Heart right ventricle (tissue), 16 donors: ENCODE measurements at regions of chr9 and their contacts with region 1.

Region 1: GRCh38 chr9:14358523-14358922 is 44.6 kb upstream of the NFIB start:
- DNase-seq: no peak
- ATAC-seq: no peak
- H3K4me3 ChIP-seq: no peak overlapping the region
- H3K27ac ChIP-seq: no peak overlapping the region
- H3K4me1 ChIP-seq: peaks cover 0 to 30% (median 25%) of the 10 kb centered on the region in 9 donors
- H3K27me3 ChIP-seq: no peaks in the 10 kb centered on the region
- CTCF ChIP-seq: no peak

Region 2: GRCh38 chr9:13351778-13352386 is 1006.6 kb before region 1 on chr9:
- intact Hi-C with region 1: loop called in 3 of 10 experiments (anchors 5 to 10 kb)
- DNase-seq: peak in 1 of 2 donors; percentile 40
- ATAC-seq: peak in 2 of 8 donors; percentile 31 to 55
- H3K4me3 ChIP-seq: no peak overlapping the region
- H3K27ac ChIP-seq: no peak overlapping the region
- H3K4me1 ChIP-seq: no peaks in the 10 kb centered on the region
- H3K27me3 ChIP-seq: no peaks in the 10 kb centered on the region
- CTCF ChIP-seq: peak; percentile 54 to 84 (median 68)

Region 3: GRCh38 chr9:14251154-14252071 is 107.1 kb before region 1 on chr9:
- intact Hi-C with region 1: no loop called
- DNase-seq: peak; percentile 82 to 87
- ATAC-seq: peak; percentile 88 to 98 (median 94)
- H3K4me3 ChIP-seq: peak overlapping the region in 5 of 10 donors; percentile 7 to 23 (median 12)
- H3K27ac ChIP-seq: peak overlapping the region in 9 of 10 donors; percentile 49 to 82 (median 71)
- H3K4me1 ChIP-seq: peaks cover 20 to 87% (median 63%) of the 10 kb centered on the region in 9 donors
- H3K27me3 ChIP-seq: no peaks in the 10 kb centered on the region
- CTCF ChIP-seq: no peak

Region 4: DNA sequence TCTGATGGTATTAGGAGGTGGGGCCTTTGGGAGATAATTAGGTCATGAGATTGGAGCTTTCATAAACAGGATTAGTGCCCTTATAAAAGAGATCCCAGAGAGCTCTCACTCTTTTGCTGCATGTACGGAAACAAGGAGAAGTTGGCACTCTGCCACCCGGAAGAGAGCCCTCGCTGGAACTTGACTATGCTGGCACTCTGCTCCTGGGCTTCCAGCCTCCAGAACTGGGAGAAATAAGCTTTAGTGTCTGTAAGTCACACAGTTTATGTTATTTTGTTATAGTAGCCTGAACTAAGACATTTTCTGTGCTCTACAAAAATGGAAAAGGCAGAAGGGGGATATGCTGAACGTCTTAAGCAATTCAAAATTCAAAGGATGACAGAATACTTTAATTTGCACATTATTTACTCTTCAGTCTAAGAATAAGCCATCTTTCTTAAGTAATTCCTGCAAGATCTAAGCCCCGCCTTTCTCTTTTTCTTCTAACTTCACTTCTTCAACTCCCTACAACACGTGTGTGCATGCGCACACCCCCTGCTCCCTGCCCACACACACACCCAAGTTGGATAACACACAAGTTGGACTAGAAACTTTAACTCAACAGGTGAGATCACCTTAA is 61.9 kb before region 1 on chr9:
- intact Hi-C with region 1: no loop called
- DNase-seq: peak; percentile 36 to 42
- ATAC-seq: peak in 2 of 8 donors; percentile 35 to 57
- H3K4me3 ChIP-seq: no peak overlapping the region
- H3K27ac ChIP-seq: peak overlapping the region in 6 of 10 donors; percentile 5 to 100 (median 18)
- H3K4me1 ChIP-seq: peaks cover 11 to 96% (median 85%) of the 10 kb centered on the region in 9 donors
- H3K27me3 ChIP-seq: no peaks in the 10 kb centered on the region
- CTCF ChIP-seq: no peak

Region 5: GRCh38 chr9:14395317-14396082 is 37.0 kb after region 1 on chr9:
- intact Hi-C with region 1: loop called in 2 of 10 experiments (anchors 5 kb)
- DNase-seq: peak; percentile 21 to 54
- ATAC-seq: peak; percentile 47 to 85 (median 77)
- H3K4me3 ChIP-seq: peak overlapping the region in 3 of 10 donors; percentile 7 to 38 (median 23)
- H3K27ac ChIP-seq: peak overlapping the region in 6 of 10 donors; percentile 7 to 56 (median 52)
- H3K4me1 ChIP-seq: peaks cover 0 to 21% (median 9%) of the 10 kb centered on the region in 9 donors
- H3K27me3 ChIP-seq: no peaks in the 10 kb centered on the region
- CTCF ChIP-seq: no peak